Transverse colon (tissue), 4 donors: ENCODE measurements at regions of chr18 and their contacts with region 1.

Region 1: GRCh38 chr18:24346254-24346653 is 51.4 kb downstream of the OSBPL1A start:
- DNase-seq: no peak
- H3K4me3 ChIP-seq: no peak overlapping the region
- H3K27ac ChIP-seq: no peak overlapping the region
- H3K4me1 ChIP-seq: no peaks in the 10 kb centered on the region
- H3K27me3 ChIP-seq: no peaks in the 10 kb centered on the region
- CTCF ChIP-seq: no peak
- EP300 ChIP-seq: no peak
- POLR2A ChIP-seq: no peak

Region 2: DNA sequence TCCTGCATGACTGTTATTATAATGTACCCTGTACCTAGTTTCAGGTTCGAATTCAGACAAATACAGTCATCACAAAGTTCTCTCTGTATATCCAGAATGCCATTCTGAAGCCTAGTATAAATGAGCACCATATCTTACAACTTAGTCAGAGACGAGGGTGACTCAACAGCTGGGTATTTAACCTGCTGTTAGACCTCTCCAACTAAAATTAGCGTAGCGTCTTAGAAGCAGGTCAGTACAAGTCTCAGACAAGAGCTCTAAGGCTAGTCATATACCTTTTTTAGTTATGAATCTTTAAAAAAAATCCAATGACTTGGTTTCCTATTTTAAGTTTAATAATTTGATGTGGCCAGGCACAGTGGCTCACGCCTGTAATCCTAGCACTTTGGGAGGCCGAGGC is 133.3 kb before region 1 on chr18:
- in situ Hi-C with region 1: no loop called
- intact Hi-C with region 1: no loop called
- DNase-seq: no peak
- H3K4me3 ChIP-seq: no peak overlapping the region
- H3K27ac ChIP-seq: peak overlapping the region in 3 of 4 donors; percentile 7 to 52 (median 27)
- H3K4me1 ChIP-seq: peaks cover 10 to 54% (median 33%) of the 10 kb centered on the region in 4 donors
- H3K27me3 ChIP-seq: no peaks in the 10 kb centered on the region
- CTCF ChIP-seq: no peak
- EP300 ChIP-seq: no peak
- POLR2A ChIP-seq: no peak

Region 3: GRCh38 chr18:24231773-24232735 is 114.2 kb before region 1 on chr18:
- in situ Hi-C with region 1: loop called in 1 of 4 experiments (anchors 25 kb)
- intact Hi-C with region 1: no loop called
- DNase-seq: no peak
- H3K4me3 ChIP-seq: no peak overlapping the region
- H3K27ac ChIP-seq: peak overlapping the region; percentile 29 to 71 (median 58)
- H3K4me1 ChIP-seq: peaks cover 5 to 40% (median 24%) of the 10 kb centered on the region in 4 donors
- H3K27me3 ChIP-seq: no peaks in the 10 kb centered on the region
- CTCF ChIP-seq: no peak
- EP300 ChIP-seq: peak; percentile 27
- POLR2A ChIP-seq: no peak